ENCODE measurements at regions of chr13 and their contacts with region 1.

Region 1: GRCh38 chr13:30306762-30307193 is 573 bp downstream of the KATNAL1 start:
- DNase-seq: peak; percentile 70 to 94 (median 85)
- ATAC-seq: peak; percentile 89 to 93 (median 92)
- H3K4me3 ChIP-seq: peak overlapping the region; percentile 79 to 93
- H3K4me3 Mint-ChIP-seq: peak overlapping the region; percentile 77 to 89 (median 87)
- H3K27ac ChIP-seq: peak overlapping the region; percentile 50
- H3K27ac Mint-ChIP-seq: peak overlapping the region; percentile 66 to 88
- H3K4me1 ChIP-seq: peaks cover 6 to 10% of the 10 kb centered on the region in 2 experiments
- H3K4me1 Mint-ChIP-seq: peaks cover 6 to 42% (median 25%) of the 10 kb centered on the region in 3 donors
- H3K27me3 ChIP-seq: no peaks in the 10 kb centered on the region
- H3K27me3 Mint-ChIP-seq: no peaks in the 10 kb centered on the region

Region 2: GRCh38 chr13:30247406-30247805 is 59.4 kb before region 1 on chr13:
- CTCF ChIA-PET with region 1: no interaction called
- POLR2A ChIA-PET with region 1: no interaction called
- DNase-seq: no peak
- ATAC-seq: no peak
- H3K4me3 ChIP-seq: no peak overlapping the region
- H3K4me3 Mint-ChIP-seq: no peak overlapping the region
- H3K27ac ChIP-seq: no peak overlapping the region
- H3K27ac Mint-ChIP-seq: no peak overlapping the region
- H3K4me1 ChIP-seq: no peaks in the 10 kb centered on the region
- H3K4me1 Mint-ChIP-seq: no peaks in the 10 kb centered on the region
- H3K27me3 ChIP-seq: no peaks in the 10 kb centered on the region
- H3K27me3 Mint-ChIP-seq: no peaks in the 10 kb centered on the region

Region 3: DNA sequence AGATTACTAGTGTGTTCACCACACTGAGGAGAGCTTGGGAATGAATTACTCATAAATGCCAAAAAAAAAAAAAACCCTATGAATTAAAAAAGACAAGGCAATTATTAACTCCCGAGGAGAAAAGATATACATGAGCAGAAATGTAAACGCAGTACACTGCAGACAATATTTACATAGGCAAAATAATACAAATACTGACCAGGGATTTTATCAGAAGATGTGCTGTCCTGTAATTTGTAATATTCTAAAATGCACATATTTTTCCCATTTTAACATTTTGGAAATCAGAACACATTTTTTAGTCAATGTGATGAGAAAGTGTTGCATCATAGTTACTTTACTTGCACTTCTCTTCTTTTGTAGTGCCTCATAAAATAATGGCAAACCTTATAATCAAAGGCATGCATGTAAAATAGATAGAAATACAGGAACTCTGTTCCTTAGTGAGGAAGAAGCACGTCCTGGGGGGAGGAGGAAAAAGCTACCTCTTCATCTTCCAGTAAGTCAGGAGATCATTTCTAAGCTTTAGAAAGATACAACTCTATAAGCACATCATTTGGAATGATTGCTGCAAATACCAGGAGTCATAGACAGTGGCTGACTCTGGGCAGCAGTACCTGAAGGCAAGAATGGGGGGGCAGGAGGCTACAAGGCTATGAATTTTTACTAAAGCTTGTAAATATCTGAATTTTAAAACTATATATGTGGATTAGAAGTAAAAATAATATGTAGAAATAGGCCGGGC is 46.9 kb after region 1 on chr13:
- CTCF ChIA-PET with region 1: no interaction called
- POLR2A ChIA-PET with region 1: interaction called in 1 of 2 experiments, 15 read pairs
- DNase-seq: no peak
- ATAC-seq: no peak
- H3K4me3 ChIP-seq: no peak overlapping the region
- H3K4me3 Mint-ChIP-seq: peak overlapping the region in 1 of 3 donors; percentile 1
- H3K27ac ChIP-seq: no peak overlapping the region
- H3K27ac Mint-ChIP-seq: no peak overlapping the region
- H3K4me1 ChIP-seq: peaks cover 9 to 18% of the 10 kb centered on the region in 2 experiments
- H3K4me1 Mint-ChIP-seq: peaks cover 22 to 33% (median 25%) of the 10 kb centered on the region in 3 donors
- H3K27me3 ChIP-seq: no peaks in the 10 kb centered on the region
- H3K27me3 Mint-ChIP-seq: no peaks in the 10 kb centered on the region

Region 4: DNA sequence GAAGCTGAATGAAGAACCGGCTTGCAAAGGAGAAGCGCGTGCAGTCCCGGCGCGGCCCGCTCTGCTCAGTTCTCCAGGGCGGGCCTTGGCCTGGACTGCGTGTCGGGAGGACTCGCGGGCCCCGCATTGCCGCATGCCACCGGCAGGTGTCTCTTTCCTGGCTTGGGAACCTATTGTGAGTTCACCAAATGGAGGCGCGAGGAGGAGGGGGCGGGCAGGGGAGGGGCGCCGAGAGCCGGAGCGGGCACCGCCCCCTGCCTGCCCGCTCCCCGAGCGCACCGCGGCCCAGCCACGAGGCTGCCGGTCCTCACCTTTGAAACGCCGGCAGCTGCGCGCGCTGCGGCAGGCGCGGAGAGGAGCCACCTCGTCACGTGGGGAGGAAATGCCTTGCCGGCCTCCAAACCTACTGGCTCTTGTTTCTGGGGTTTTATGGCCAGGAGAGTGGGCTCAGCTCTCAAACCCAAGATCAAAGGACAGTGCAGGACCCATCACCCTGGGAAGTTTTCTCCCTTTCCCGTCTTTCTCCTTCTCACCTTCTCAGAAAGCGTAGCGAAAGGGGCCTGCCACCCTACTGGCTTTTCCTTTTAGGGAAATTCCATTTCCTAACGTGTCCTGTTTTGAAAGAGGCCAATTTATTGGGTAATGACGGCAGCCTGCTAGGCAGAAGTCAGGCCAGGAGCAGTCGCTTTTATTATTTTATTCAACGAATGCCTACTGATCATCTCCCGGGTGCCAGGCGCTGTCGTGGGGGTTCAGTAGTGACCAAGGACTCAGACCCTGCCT is 101.7 kb after region 1 on chr13:
- CTCF ChIA-PET with region 1: interaction called in 1 of 2 experiments, 11 read pairs
- POLR2A ChIA-PET with region 1: no interaction called
- DNase-seq: peak; percentile 79 to 94 (median 88)
- ATAC-seq: peak; percentile 93 to 97 (median 94)
- H3K4me3 ChIP-seq: peak overlapping the region in 1 of 2 donors; percentile 33
- H3K4me3 Mint-ChIP-seq: peak overlapping the region; percentile 58 to 71 (median 61)
- H3K27ac ChIP-seq: peak overlapping the region; percentile 75
- H3K27ac Mint-ChIP-seq: peak overlapping the region; percentile 79 to 91
- H3K4me1 ChIP-seq: peaks cover 3 to 17% of the 10 kb centered on the region in 2 experiments
- H3K4me1 Mint-ChIP-seq: peaks cover 37 to 42% (median 38%) of the 10 kb centered on the region in 3 donors
- H3K27me3 ChIP-seq: no peaks in the 10 kb centered on the region
- H3K27me3 Mint-ChIP-seq: no peaks in the 10 kb centered on the region